ENCODE measurements at regions of chr2 and their contacts with region 1.

Region 1: GRCh38 chr2:230712443-230713330 is at the start of gene CAB39:
- DNase-seq: peak; percentile 82 to 94 (median 90)
- ATAC-seq: peak; percentile 96
- H3K4me3 ChIP-seq: peak within 1 kb of the TSS; percentile 92
- H3K4me3 Mint-ChIP-seq: peak within 1 kb of the TSS; percentile 91 to 99 (median 98)
- H3K27ac ChIP-seq: peak within 1 kb of the TSS; percentile 91
- H3K27ac Mint-ChIP-seq: peak within 1 kb of the TSS; percentile 92 to 98 (median 97)
- H3K4me1 ChIP-seq: peaks cover 27 to 35% of the 10 kb centered on the region in 2 donors
- H3K4me1 Mint-ChIP-seq: peaks cover 31 to 53% (median 50%) of the 10 kb centered on the region in 7 donors
- H3K27me3 ChIP-seq: no peaks in the 10 kb centered on the region
- H3K27me3 Mint-ChIP-seq: no peaks in the 10 kb centered on the region
- total RNA-seq, gene CAB39: 71.0 to 186 (median 95.4) TPM

Region 2: DNA sequence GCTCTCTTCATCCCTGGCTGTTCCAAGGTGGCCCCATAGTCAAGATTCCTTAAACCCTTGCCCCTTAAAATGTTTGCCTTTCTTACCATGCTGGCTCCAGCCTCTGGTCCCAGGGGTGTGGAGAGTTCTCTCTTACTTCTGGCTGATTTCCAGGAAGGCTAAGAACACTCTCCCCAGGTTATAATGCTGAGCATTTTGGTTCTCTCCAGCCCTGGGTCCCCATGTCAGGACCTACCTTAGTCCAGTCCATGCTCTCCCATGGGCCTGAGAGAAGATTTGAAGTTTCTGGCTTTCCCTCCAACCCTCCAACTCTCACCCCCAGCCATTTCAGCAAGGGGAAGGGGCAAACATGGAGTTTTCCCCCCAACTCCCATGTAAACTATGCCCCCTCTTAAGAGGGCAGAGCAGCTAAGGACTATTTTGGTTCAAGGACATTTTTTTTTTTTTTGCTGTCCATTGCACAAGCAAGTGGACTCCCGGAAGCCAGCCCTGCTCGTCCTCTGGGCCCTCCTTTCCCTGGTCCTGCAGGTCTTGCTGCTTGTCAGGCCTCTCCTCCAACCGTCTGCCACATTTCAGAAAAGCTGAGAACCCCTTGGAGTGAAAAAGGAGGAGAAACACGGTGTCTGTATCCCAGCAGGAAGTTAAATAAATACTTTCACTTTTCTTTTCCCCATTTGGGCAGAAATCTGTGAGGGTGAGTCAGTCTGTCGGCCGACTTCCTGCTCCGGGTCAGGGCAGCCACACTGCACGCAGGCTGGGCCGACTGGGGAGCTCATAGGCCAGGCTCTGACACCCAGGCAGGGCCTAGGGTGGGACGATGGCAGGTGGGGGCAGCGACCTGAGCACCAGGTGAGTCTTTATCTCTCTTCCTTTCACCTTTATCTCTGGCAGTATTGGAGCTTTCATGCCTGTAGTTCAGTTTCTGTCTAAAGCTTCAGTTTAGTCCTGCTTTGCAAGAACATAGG is 386.0 kb before region 1 on chr2 and contains the start of gene SP140L:
- CTCF ChIA-PET with region 1: no interaction called
- POLR2A ChIA-PET with region 1: no interaction called
- intact Hi-C with region 1: loop called in 1 of 2 experiments (anchors 2 kb)
- DNase-seq: peak; percentile 48 to 83 (median 73)
- ATAC-seq: peak; percentile 99
- H3K4me3 ChIP-seq: peak within 1 kb of the TSS; percentile 86
- H3K4me3 Mint-ChIP-seq: peak within 1 kb of the TSS; percentile 90 to 100 (median 94)
- H3K27ac ChIP-seq: peak within 1 kb of the TSS; percentile 92
- H3K27ac Mint-ChIP-seq: peak within 1 kb of the TSS; percentile 95 to 99 (median 99)
- H3K4me1 ChIP-seq: peaks cover 23 to 36% of the 10 kb centered on the region in 2 donors
- H3K4me1 Mint-ChIP-seq: peaks cover 58 to 86% (median 85%) of the 10 kb centered on the region in 7 donors
- H3K27me3 ChIP-seq: no peaks in the 10 kb centered on the region
- H3K27me3 Mint-ChIP-seq: no peaks in the 10 kb centered on the region
- total RNA-seq, gene SP140L: 62.8 to 121 (median 89.5) TPM

Region 3: GRCh38 chr2:230643576-230644291 is 69.0 kb before region 1 on chr2:
- CTCF ChIA-PET with region 1: interaction called, 4 read pairs
- POLR2A ChIA-PET with region 1: interaction called, 8 read pairs
- intact Hi-C with region 1: loop called (anchors 1 kb)
- DNase-seq: peak in 8 of 9 donors; percentile 42 to 72 (median 62)
- ATAC-seq: peak; percentile 93
- H3K4me3 ChIP-seq: peak overlapping the region; percentile 31
- H3K4me3 Mint-ChIP-seq: peak overlapping the region; percentile 23 to 84 (median 72)
- H3K27ac ChIP-seq: peak overlapping the region; percentile 68
- H3K27ac Mint-ChIP-seq: peak overlapping the region; percentile 87 to 98 (median 94)
- H3K4me1 ChIP-seq: peaks cover 20 to 24% of the 10 kb centered on the region in 2 donors
- H3K4me1 Mint-ChIP-seq: peaks cover 14 to 36% (median 24%) of the 10 kb centered on the region in 7 donors
- H3K27me3 ChIP-seq: no peaks in the 10 kb centered on the region
- H3K27me3 Mint-ChIP-seq: no peaks in the 10 kb centered on the region

Region 4: GRCh38 chr2:230694241-230694640 is 18.4 kb before region 1 on chr2:
- CTCF ChIA-PET with region 1: no interaction called
- POLR2A ChIA-PET with region 1: no interaction called
- intact Hi-C with region 1: no loop called
- DNase-seq: peak in 1 of 9 donors; percentile 34
- ATAC-seq: no peak
- H3K4me3 ChIP-seq: no peak overlapping the region
- H3K4me3 Mint-ChIP-seq: peak overlapping the region in 1 of 10 donors; percentile 57
- H3K27ac ChIP-seq: no peak overlapping the region
- H3K27ac Mint-ChIP-seq: peak overlapping the region in 4 of 9 donors; percentile 46 to 84 (median 65)
- H3K4me1 ChIP-seq: peaks cover 0 to 6% of the 10 kb centered on the region in 2 donors
- H3K4me1 Mint-ChIP-seq: peaks cover 6 to 36% (median 11%) of the 10 kb centered on the region in 7 donors
- H3K27me3 ChIP-seq: no peaks in the 10 kb centered on the region
- H3K27me3 Mint-ChIP-seq: no peaks in the 10 kb centered on the region

Region 5: GRCh38 chr2:230751062-230751461 is 38.4 kb after region 1 on chr2:
- CTCF ChIA-PET with region 1: interaction called, 5 read pairs
- POLR2A ChIA-PET with region 1: no interaction called
- intact Hi-C with region 1: loop called in 1 of 2 experiments (anchors 5 kb)
- DNase-seq: no peak
- ATAC-seq: peak; percentile 38
- H3K4me3 ChIP-seq: no peak overlapping the region
- H3K4me3 Mint-ChIP-seq: peak overlapping the region in 2 of 10 donors; percentile 6 to 26
- H3K27ac ChIP-seq: no peak overlapping the region
- H3K27ac Mint-ChIP-seq: peak overlapping the region in 4 of 9 donors; percentile 14 to 64 (median 34)
- H3K4me1 ChIP-seq: peaks cover 14 to 28% of the 10 kb centered on the region in 2 donors
- H3K4me1 Mint-ChIP-seq: peaks cover 53 to 97% (median 90%) of the 10 kb centered on the region in 7 donors
- H3K27me3 ChIP-seq: no peaks in the 10 kb centered on the region
- H3K27me3 Mint-ChIP-seq: no peaks in the 10 kb centered on the region

Region 6: DNA sequence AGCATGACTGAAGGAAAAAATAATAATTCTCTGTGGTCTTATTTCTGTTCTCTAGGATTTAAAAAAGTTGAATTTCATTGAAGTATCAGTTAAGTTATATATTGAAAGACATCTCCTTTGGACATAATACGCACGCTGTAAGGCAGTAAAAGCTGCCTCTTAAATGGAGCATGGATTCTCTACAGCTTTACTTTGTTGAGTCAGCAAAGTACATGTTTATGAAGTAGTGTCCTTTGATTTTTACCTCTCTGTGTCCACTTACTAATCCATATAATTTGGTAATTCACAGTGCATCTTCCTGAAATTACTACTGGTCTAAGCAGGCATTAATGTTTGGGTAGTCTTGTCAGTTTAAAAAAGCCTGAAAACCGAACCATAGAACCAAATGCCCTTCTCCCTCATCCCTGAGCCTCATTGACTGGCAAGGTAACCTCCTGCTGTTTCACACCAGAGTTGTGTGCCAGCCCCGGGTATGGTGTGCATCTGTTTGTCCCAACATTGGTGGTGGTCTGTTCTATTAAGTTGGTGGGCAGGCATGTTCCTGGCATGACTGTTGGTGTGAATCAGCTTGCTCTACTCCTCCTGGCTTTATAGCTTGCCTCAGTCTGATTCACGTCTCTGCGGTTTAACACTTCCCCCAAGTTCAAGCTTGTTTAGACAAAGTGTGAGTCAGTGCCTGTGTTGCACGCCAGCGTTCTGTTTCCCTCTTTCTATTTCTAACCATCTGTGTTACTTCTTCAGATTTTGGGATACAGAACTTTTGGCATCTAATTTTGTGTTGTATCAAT is 81.1 kb after region 1 on chr2:
- CTCF ChIA-PET with region 1: interaction called, 14 read pairs
- POLR2A ChIA-PET with region 1: interaction called, 22 read pairs
- intact Hi-C with region 1: loop called (anchors 1 kb)
- DNase-seq: peak in 8 of 9 donors; percentile 33 to 70 (median 49)
- ATAC-seq: peak; percentile 95
- H3K4me3 ChIP-seq: peak overlapping the region; percentile 3
- H3K4me3 Mint-ChIP-seq: peak overlapping the region; percentile 22 to 82 (median 64)
- H3K27ac ChIP-seq: peak overlapping the region; percentile 39
- H3K27ac Mint-ChIP-seq: peak overlapping the region in 8 of 9 donors; percentile 82 to 94 (median 90)
- H3K4me1 ChIP-seq: peaks cover 34 to 47% of the 10 kb centered on the region in 2 donors
- H3K4me1 Mint-ChIP-seq: peaks cover 20 to 65% (median 55%) of the 10 kb centered on the region in 7 donors
- H3K27me3 ChIP-seq: no peaks in the 10 kb centered on the region
- H3K27me3 Mint-ChIP-seq: no peaks in the 10 kb centered on the region

Measured in naive thymus-derived CD4-positive, alpha-beta T cell (primary cell).